OCI-LY7 (cell line): ENCODE measurements at regions of chr2 and their contacts with region 1.

Region 1: GRCh38 chr2:201158111-201158929 is 24.6 kb upstream of the CASP10 start:
- DNase-seq: peak; percentile 83
- H3K4me3 ChIP-seq: peak overlapping the region; percentile 24
- H3K27ac ChIP-seq: peak overlapping the region; percentile 55
- H3K4me1 ChIP-seq: peaks cover 20% of the 10 kb centered on the region
- CTCF ChIP-seq: peak; percentile 87

Region 2: DNA sequence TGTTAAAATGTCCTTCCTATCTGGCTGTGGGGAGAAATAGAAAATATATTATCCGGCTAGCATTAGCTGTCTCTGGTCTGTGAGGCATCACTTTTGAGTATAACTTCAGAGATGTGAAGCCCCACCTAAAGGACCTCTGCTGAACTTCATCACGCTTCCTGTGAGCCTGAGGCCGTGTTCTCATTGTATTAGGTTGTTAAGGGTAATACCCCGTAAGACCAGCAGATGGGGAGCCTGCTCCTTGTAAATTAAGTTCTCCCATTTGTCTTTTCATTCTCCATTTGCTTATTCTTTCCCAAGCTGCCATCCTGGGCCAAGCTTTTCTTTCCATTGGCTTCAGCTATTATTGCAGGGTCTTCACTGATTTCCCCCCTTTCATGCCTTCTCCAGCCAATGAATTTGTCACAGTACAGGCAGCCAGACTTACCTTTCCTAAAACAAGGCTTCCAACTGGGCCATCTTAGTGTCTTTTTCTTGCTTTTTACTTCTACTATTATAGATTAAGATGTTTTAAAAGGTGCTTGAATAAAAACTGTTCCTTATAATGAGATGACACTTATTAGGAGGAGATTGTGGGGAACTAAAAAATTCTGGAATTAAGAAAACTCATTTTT is 256.8 kb before region 1 on chr2:
- CTCF ChIA-PET with region 1: no interaction called
- POLR2A ChIA-PET with region 1: no interaction called
- intact Hi-C with region 1: loop called (anchors 5 kb)
- DNase-seq: peak; percentile 92
- H3K4me3 ChIP-seq: no peak overlapping the region
- H3K27ac ChIP-seq: no peak overlapping the region
- H3K4me1 ChIP-seq: peaks cover 5% of the 10 kb centered on the region
- CTCF ChIP-seq: peak; percentile 95

Region 3: GRCh38 chr2:201071479-201072200 is 86.7 kb before region 1 on chr2 and contains the starts of genes HYCC2 and NDUFB3:
- CTCF ChIA-PET with region 1: interaction called, 3 read pairs
- POLR2A ChIA-PET with region 1: interaction called, 5 read pairs
- intact Hi-C with region 1: loop called (anchors 1 kb)
- DNase-seq: peak; percentile 96
- H3K4me3 ChIP-seq: peak within 1 kb of the TSS; percentile 74
- H3K27ac ChIP-seq: peak within 1 kb of the TSS; percentile 58
- H3K4me1 ChIP-seq: peaks cover 39% of the 10 kb centered on the region
- CTCF ChIP-seq: peak; percentile 53; the same call in 1 of the 2 replicates
- total RNA-seq, gene HYCC2: 8.6 and 8.8 TPM in 2 replicates
- total RNA-seq, gene NDUFB3: 90.5 and 134 TPM in 2 replicates

Region 4: DNA sequence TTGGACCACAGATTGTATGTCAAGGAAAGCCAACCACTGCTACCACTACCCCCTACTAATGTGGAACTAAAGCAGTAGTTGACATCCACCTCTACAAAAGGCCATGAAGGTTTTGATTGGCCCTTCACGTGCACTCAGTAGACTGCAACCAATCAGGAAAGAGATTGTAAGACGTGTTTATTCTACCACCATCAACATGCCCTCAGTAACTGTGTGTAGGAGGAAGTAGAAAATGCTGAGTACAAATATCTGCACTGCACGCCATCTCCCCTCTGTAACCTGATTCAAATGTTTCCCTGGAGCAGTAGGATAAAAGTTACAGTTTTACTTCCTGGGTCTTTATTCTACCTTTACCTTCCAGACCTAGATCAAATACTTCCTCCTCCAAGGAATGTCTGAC is 21.7 kb after region 1 on chr2:
- CTCF ChIA-PET with region 1: no interaction called
- POLR2A ChIA-PET with region 1: no interaction called
- intact Hi-C with region 1: no loop called
- DNase-seq: no peak
- H3K4me3 ChIP-seq: no peak overlapping the region
- H3K27ac ChIP-seq: no peak overlapping the region
- H3K4me1 ChIP-seq: peaks cover 15% of the 10 kb centered on the region
- CTCF ChIP-seq: no peak

Region 5: GRCh38 chr2:201223089-201224073 is 65.1 kb after region 1 on chr2:
- CTCF ChIA-PET with region 1: no interaction called
- POLR2A ChIA-PET with region 1: no interaction called
- intact Hi-C with region 1: no loop called
- DNase-seq: no peak
- H3K4me3 ChIP-seq: peak overlapping the region; percentile 32
- H3K27ac ChIP-seq: no peak overlapping the region
- H3K4me1 ChIP-seq: peaks cover 25% of the 10 kb centered on the region
- CTCF ChIP-seq: no peak

Region 6: DNA sequence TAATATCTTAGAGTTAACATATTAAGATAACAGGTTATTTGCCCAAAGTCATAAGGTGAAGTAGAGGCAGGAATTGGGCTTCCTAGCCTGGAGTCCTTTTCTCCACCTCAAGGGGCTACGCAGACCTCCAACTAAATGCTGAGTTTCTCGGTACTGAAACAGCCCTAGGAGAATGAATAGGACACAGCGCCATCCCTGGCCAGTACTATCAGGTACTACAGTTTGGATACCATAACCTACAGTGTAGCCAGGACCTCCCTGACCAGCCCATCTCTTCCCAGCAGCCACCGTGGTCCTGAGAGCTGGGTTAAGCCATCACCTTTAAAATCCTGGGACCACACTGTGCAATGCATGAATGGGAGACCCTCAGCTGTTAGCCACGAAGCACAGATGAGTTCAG is 117.7 kb after region 1 on chr2:
- CTCF ChIA-PET with region 1: no interaction called
- POLR2A ChIA-PET with region 1: no interaction called
- intact Hi-C with region 1: no loop called
- DNase-seq: no peak
- H3K4me3 ChIP-seq: no peak overlapping the region
- H3K27ac ChIP-seq: no peak overlapping the region
- H3K4me1 ChIP-seq: no peaks in the 10 kb centered on the region
- CTCF ChIP-seq: peak; percentile 41; the same call in 1 of the 2 replicates